ENCODE measurements at regions of chr2 and their contacts with region 1.

Region 1: GRCh38 chr2:228642861-228643260 is 461.4 kb upstream of the SPHKAP start:
- DNase-seq: no peak
- H3K4me3 ChIP-seq: no peak overlapping the region
- H3K27ac ChIP-seq: no peak overlapping the region
- H3K4me1 ChIP-seq: no peaks in the 10 kb centered on the region
- H3K27me3 ChIP-seq: peaks cover 5% of the 10 kb centered on the region
- CTCF ChIP-seq: no peak

Region 2: DNA sequence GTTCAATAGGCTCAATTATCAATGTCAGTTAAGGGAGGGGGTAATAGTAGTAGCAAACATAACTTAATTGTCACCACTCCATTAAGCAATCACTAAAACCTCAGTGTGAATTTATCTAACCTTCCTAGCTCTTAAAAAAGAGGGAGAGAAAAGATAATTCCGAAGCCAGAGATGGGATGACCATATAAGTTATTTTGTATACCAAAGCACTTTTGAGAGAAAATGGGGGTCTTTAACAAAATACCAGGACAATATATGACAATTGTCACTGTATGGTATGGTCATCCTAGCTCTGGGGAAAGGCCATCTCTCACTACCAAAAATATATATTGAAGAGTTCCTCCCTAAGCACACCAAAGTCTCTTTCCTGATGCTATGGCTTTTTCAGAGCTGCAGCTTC is 516.5 kb before region 1 on chr2:
- CTCF ChIA-PET with region 1: no interaction called
- dilution Hi-C with region 1: no loop called
- in situ Hi-C with region 1: no loop called
- intact Hi-C with region 1: loop called (anchors 5 kb)
- DNase-seq: no peak
- H3K4me3 ChIP-seq: no peak overlapping the region
- H3K27ac ChIP-seq: no peak overlapping the region
- H3K4me1 ChIP-seq: no peaks in the 10 kb centered on the region
- H3K27me3 ChIP-seq: no peaks in the 10 kb centered on the region
- CTCF ChIP-seq: no peak